ENCODE measurements at regions of chr14 and their contacts with region 1.

Region 1: DNA sequence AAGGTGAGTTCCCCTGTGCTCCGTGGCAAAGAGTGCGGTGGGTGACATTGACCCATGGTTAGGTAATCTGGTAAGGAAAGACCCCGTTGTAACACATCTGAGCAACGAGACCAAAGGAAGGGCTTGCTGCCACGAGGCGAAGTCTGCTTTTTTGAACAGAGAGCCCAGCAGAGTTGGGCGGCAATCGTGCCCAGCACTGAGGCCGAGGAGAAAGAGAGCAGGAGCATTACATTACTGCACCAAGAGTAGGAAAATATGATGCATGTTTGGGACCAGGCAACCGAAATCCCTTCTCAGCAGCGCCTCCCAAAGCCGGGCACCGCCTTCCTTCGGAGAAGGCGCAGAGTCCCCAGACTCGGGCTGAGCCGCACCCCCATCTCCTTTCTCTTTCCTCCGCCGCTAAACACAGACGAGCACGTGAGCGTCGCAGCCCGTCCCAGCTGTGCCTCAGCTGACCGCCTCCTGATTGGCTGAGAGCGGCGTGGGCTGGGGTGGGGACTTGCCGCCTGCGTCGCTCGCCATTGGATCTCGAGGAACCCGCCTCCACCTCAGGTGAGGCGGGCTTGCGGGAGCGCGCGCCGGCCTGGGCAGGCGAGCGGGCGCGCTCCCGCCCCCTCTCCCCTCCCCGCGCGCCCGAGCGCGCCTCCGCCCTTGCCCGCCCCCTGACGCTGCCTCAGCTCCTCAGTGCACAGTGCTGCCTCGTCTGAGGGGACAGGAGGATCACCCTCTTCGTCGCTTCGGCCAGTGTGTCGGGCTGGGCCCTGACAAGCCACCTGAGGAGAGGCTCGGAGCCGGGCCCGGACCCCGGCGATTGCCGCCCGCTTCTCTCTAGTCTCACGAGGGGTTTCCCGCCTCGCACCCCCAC is at the start of gene HIF1A:
- DNase-seq: peak; percentile 100
- H3K4me3 ChIP-seq: peak within 1 kb of the TSS; percentile 99
- H3K27ac ChIP-seq: peak within 1 kb of the TSS; percentile 96
- H3K4me1 ChIP-seq: peaks cover 9% of the 10 kb centered on the region
- H3K27me3 ChIP-seq: no peaks in the 10 kb centered on the region
- total RNA-seq, gene HIF1A: 1,114 and 1,257 TPM in 2 replicates

Region 2: DNA sequence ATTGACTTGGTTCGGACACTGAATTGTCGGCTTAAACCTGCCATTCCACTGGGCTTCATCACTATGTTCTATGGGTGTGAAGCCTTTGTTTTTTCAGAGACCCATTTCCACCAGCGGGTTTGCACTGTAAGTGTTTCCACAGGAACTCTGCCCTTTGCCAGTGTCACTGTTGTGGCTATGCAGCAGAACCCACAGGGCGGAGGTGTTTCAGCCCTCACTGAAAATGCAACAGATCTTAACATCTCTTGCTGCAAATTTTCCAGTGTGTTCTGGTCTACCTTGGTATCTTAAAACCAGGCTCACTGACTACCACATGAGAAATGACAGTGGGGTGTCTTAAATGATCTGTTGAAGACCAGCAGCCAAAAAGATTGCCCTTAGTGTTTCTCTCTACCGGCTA is 352.6 kb before region 1 on chr14:
- in situ Hi-C with region 1: no loop called
- DNase-seq: no peak
- H3K4me3 ChIP-seq: no peak overlapping the region
- H3K27ac ChIP-seq: no peak overlapping the region
- H3K4me1 ChIP-seq: no peaks in the 10 kb centered on the region
- H3K27me3 ChIP-seq: no peaks in the 10 kb centered on the region; the same call in 1 of the 2 replicates

Region 3: GRCh38 chr14:61568572-61569131 is 126.4 kb before region 1 on chr14:
- in situ Hi-C with region 1: loop called (anchors 10 kb)
- DNase-seq: no peak
- H3K4me3 ChIP-seq: no peak overlapping the region
- H3K27ac ChIP-seq: peak overlapping the region; percentile 93
- H3K4me1 ChIP-seq: peaks cover 88% of the 10 kb centered on the region
- H3K27me3 ChIP-seq: no peaks in the 10 kb centered on the region

Region 4: DNA sequence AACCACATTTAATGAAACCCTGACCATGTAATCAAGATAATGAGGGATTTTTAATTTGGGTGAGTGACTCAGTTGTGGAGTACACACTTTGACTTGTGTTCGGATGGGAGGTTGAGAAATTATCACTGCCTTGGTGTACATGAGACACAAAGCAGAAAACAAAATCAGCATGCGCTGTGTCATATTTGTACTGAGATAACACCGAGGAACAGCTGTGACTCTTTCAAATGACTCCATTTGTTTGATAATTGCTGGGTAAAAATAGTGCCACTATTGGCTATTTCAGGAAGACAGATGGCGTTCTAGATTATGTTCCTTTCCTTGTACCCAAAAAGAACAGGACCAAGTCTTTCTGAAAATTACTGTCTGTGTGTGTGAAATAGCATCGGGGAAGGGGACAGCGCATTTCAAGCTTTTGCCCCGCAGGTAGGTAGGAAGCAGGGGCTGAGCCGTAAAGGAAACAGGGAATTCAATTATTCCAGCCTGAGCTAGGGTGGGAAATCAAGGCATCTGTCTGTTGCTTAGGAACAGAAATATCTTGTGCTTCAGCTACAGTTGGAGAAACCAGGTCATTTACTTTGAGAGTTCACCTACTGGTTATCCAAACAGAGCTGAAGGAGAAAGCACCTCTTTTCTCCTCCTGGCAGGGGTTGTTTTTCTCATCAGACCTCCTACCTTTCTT is 181.4 kb after region 1 on chr14:
- in situ Hi-C with region 1: no loop called
- DNase-seq: no peak
- H3K4me3 ChIP-seq: no peak overlapping the region
- H3K27ac ChIP-seq: no peak overlapping the region
- H3K4me1 ChIP-seq: no peaks in the 10 kb centered on the region
- H3K27me3 ChIP-seq: peaks cover 36% of the 10 kb centered on the region

Region 5: DNA sequence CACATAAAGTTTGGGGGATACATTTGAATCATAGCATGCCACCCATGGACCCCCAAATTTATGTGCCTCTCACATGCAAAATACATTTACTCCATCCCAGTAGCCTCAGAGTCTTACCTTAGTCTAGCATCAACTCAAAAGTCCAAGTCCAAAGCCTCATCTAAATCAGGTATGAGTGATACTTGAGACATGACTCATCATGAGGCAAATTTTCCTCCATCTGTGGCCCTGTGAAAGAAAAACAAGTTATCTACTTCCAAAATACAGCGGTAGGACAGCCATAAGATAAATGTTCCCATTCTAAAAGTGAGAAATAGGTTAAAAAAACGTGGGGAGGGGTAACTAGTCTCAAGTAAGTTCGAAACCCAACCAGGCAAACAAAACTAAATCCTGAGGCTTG is 511.4 kb after region 1 on chr14:
- in situ Hi-C with region 1: no loop called
- DNase-seq: peak; percentile 11
- H3K4me3 ChIP-seq: no peak overlapping the region
- H3K27ac ChIP-seq: no peak overlapping the region
- H3K4me1 ChIP-seq: peaks cover 17% of the 10 kb centered on the region
- H3K27me3 ChIP-seq: no peaks in the 10 kb centered on the region; the same call in 1 of the 2 replicates

Measured in GM23248 (cell line).